ENCODE measurements at regions of chr7 and their contacts with region 1.

Region 1: DNA sequence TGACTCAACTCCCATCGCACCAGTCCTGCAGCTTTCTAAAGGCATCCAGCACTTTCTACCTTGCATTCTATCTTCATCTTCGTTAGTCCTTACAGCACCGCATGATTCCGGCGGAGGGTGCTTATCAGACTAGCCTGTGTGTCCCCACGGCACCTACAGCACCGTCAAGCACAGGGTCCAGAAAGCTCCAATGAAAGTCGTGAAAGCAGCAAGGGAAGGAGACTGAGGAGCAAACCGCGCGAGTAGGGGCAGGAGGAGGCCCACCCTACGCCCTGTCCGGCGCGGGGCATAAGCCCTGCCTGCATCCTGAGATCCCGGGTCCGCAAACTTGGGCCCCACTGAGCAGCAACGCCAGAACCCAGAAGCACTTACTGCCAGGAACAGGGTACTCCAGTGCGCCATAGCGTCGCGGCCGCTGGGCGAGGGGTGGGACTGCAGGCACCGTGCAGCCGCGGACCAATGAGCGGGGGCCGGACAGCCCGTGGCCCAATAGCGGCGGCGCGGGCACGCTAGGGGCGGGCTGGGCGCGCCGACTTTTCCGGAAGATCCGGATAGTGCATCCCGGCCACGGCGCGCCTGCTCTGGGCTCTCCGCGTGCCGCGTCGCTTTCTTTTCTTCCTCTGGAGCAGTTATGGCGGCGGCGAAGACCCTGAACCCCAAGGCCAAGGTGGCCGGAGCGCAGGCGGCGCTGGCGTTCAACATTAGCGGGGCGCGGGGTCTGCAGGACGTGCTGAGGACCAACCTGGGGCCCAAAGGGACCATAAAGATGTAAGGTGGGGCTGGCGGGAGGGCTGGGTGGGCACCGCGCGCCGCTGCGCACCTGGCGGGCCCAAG is 122.1 kb upstream of the VKORC1L1 start:
- DNase-seq: peak; percentile 97

Region 2: DNA sequence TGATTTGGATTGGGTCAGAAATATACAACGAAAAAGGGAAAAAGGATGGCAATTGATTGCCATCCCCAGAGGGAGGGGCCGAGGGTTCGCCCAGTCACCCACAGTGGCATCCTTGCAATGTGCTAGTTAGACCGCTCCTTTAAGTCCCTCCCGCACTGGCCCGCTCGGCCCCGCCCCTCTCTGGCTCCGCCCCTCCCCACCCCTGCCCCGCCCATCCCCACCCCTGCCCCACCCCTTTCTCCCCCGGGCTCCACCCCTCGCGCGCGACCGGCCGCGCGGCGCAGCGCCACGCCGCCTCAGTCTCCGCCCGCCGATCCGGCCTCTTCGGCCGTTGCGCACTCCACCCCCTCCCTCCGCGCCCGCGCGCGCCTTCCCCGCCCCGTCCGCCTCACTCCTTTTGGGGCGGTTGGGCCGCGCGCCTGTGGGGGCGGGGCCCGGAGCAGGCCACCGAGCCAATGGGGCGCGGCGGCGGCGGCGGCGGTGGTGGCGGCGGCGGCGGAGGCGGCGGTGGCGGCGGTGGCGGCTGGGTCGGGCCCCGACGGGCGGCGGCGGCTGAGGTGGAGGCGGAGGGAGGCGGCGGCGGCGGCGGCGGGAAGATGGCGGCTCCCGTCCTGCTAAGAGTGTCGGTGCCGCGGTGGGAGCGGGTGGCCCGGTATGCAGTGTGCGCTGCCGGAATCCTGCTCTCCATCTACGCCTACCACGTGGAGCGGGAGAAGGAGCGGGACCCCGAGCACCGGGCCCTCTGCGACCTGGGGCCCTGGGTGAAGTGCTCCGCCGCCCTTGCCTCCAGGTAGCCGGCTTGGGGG is 122.3 kb after region 1 on chr7 and contains the start of gene VKORC1L1:
- intact Hi-C with region 1: loop called (anchors 5 kb)
- DNase-seq: peak; percentile 98
- total RNA-seq, gene VKORC1L1: 18.7 TPM

Region 3: DNA sequence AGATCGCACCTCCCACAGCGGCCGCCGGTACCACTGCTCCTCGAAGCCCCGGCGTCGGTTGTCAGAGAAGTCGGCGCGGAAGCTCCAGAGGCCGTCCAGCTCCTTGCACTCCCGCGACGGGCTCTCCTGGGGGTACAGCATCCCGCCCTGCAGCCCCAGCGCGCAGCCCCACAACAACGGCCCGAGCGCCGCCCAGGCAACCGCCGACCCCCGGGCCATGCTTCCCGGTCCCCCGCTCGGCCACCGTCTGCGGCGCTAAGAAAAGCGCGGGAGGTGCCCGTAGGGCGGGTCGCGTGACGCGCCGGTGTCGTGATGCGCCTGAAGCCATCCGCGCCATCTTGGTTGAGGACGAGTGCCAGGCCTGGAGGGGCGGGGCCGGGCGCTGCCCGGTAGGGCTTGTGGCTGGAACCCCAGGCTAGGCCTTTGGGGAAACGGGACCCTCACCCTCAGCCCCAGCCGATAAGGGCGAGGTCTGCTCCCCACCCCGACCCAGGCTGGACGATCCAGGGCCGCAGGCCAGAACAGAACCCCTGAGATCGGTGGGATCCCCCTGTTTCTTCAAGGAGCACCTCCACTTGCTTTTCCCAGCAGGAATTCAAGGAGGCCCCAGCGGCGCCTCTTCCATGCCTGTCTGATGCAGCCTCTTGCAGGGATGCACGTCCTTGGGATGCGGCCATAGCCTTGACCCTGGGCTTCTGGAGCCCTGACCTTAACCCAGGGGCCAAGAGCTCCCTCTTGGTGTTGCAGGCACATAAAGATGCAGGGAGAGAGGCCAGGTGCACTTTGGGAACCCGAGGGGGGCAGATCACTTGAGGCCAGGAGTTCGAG is 231.5 kb after region 1 on chr7 and contains the start of gene GUSB:
- intact Hi-C with region 1: loop called (anchors 10 kb)
- DNase-seq: peak; percentile 97
- total RNA-seq, gene GUSB: 15.8 TPM

Region 4: DNA sequence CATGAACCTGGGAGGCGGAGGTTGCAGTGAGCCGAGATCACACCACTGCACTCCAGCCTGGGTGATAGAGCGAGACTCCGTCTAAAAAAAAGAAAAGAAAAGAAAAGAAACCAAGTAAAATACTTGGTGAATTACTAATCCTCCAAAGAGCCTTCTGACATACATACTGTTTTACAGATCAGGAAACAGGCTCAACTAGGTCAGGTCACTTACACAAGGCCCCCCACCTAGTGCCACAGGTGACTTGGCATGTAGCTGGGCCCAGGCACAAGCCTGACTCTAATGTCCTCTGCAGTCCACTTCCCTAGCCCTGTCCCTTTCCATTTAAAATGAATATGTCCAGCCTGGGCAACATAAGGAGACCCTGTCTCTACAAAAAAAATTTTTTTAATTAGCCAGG is 611.4 kb after region 1 on chr7:
- intact Hi-C with region 1: no loop called
- DNase-seq: no peak

Measured in cardiac septum (tissue), 1 donor.